Posterior vena cava (tissue), 2 donors: ENCODE measurements at regions of chr14 and their contacts with region 1.

Region 1: GRCh38 chr14:37874429-37875191 is 279.2 kb downstream of the TTC6 start:
- DNase-seq: peak; percentile 92

Region 2: GRCh38 chr14:37023875-37024565 is 850.6 kb before region 1 on chr14:
- intact Hi-C with region 1: no loop called
- DNase-seq: no peak

Region 3: GRCh38 chr14:37246427-37246914 is 628.1 kb before region 1 on chr14:
- intact Hi-C with region 1: loop called in 1 of 2 experiments (anchors 10 kb)
- DNase-seq: no peak